Heart right ventricle (tissue), 16 donors: ENCODE measurements at regions of chr6 and their contacts with region 1.

Region 1: DNA sequence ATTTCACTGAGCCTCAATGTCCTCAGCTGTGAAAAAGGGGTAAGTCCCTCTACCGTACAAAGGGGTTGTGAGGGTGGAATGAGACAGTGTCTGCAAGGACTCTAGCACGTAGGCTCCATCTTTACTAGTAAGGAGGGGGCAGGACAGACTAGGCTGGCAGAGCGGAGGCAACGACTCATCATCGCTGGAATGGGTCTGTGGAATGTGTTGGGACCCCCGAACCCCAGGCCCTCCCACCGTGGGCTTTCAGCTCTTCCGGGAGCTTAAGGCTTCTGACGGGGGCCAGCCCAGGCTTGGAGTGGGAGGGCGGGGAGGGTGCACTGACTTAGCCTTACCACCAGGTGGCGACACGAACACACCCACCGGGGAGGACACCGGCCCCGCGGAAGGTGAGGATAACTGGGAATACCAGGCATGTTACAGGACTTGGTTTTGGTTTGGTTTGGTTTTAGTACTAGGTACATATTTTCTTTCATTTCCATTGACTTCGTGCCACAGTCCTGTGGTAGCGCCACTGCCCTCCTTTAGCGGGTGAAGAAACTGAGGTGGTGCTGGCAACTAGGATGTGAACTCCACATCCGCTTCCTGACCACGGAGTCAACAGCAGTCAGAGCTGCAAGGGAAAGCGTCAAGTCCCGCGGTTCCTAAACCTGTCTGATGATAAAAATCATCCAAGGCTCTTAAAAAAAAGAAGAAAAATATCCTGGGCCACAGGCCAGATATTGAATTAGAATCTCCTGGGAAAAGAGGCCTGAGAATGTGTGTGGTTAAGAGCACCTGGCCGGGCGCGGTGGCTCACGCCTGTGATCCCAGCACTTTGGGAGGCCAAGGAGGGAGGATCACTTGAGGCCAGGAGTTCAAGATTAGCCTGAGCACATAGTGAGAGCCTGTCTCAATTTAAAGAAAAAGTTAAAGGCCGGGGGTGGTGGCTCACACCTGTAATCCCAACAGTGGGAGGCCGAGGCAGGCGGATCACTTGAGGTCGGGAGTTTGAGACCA is 10.3 kb upstream of the TULP1 start:
- DNase-seq: peak; percentile 65 to 72
- ATAC-seq: peak; percentile 82 to 95 (median 92)
- H3K4me3 ChIP-seq: peak overlapping the region in 6 of 10 donors; percentile 23 to 43 (median 36)
- H3K27ac ChIP-seq: peak overlapping the region in 1 of 10 donors; percentile 3
- H3K4me1 ChIP-seq: peaks cover 0 to 10% (median 0%) of the 10 kb centered on the region in 9 donors
- H3K27me3 ChIP-seq: no peaks in the 10 kb centered on the region
- CTCF ChIP-seq: peak; percentile 87 to 99 (median 98)

Region 2: GRCh38 chr6:35402136-35402855 is 120.7 kb before region 1 on chr6:
- intact Hi-C with region 1: no loop called
- DNase-seq: no peak
- ATAC-seq: peak in 1 of 8 donors; percentile 26
- H3K4me3 ChIP-seq: no peak overlapping the region
- H3K27ac ChIP-seq: no peak overlapping the region
- H3K4me1 ChIP-seq: peaks cover 0 to 21% (median 0%) of the 10 kb centered on the region in 9 donors
- H3K27me3 ChIP-seq: no peaks in the 10 kb centered on the region
- CTCF ChIP-seq: no peak

Region 3: DNA sequence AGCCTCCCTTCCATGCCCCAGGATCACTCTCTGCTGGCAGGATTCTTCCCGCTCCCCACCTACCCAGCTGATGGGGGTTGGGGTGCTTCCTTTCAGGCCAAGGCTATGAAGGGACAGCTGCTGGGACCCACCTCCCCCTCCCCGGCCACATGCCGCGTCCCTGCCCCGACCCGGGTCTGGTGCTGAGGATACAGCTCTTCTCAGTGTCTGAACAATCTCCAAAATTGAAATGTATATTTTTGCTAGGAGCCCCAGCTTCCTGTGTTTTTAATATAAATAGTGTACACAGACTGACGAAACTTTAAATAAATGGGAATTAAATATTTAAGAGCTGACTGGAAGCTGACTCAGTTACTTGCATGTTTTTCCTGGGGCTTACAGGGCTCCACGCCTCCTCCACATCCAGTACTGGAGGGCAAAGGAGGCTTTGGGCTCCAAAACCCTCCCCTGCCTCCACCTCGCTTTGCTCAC is 95.1 kb before region 1 on chr6:
- intact Hi-C with region 1: no loop called
- DNase-seq: no peak
- ATAC-seq: no peak
- H3K4me3 ChIP-seq: no peak overlapping the region
- H3K27ac ChIP-seq: no peak overlapping the region
- H3K4me1 ChIP-seq: peaks cover 0 to 16% (median 0%) of the 10 kb centered on the region in 9 donors
- H3K27me3 ChIP-seq: no peaks in the 10 kb centered on the region
- CTCF ChIP-seq: no peak

Region 4: GRCh38 chr6:35573495-35574110 is 50.6 kb after region 1 on chr6:
- intact Hi-C with region 1: loop called in 1 of 10 experiments (anchors 10 kb)
- DNase-seq: no peak
- ATAC-seq: no peak
- H3K4me3 ChIP-seq: no peak overlapping the region
- H3K27ac ChIP-seq: no peak overlapping the region
- H3K4me1 ChIP-seq: no peaks in the 10 kb centered on the region
- H3K27me3 ChIP-seq: no peaks in the 10 kb centered on the region
- CTCF ChIP-seq: no peak

Region 5: GRCh38 chr6:35624341-35625070 is 101.5 kb after region 1 on chr6:
- intact Hi-C with region 1: loop called in 1 of 10 experiments (anchors 5 kb)
- DNase-seq: no peak
- ATAC-seq: peak in 1 of 8 donors; percentile 23
- H3K4me3 ChIP-seq: no peak overlapping the region
- H3K27ac ChIP-seq: peak overlapping the region in 2 of 10 donors; percentile 62 to 69
- H3K4me1 ChIP-seq: peaks cover 0 to 63% (median 0%) of the 10 kb centered on the region in 9 donors
- H3K27me3 ChIP-seq: no peaks in the 10 kb centered on the region
- CTCF ChIP-seq: peak in 8 of 9 donors; percentile 10 to 51 (median 31)

Region 6: DNA sequence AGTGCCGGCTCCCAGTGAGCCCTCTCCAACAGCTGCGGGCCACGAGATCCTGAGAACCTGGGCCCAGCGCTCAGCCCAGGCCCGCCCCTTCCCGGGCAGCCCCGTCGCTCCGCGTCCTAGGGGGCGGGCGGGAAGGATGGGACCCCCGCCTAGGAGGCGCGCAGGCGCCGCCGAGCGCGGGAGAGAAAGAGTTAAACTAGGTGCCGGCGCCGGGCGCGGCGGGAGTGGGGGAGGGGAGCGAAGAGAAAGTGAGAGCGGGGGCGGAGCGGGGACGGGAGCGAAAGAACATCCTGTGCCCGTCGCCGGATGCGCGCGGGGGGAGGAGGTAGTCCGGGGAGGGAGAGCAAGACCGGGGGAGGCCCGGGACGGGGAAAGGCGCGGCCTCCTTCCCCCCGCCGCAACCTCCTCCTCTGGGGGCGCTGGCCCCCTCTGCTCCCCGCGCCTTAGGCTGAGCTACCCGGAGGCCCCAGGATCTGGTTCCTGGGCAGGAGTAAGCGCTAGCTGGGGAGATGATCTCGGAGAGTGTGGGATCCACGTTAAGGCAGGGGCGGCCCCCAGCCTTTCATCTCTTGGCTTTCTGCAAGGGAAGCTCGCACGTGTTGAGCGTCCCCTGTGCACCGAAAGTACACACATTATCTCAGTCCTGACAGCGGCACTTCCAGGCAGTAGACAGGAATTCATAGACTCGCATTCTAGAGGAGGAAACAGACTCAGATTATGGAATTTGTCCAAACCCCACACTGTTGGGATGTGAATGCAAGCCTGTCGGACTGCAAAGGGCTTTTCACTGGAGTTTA is 209.0 kb after region 1 on chr6:
- intact Hi-C with region 1: loop called (anchors 1 to 5 kb)
- DNase-seq: peak; percentile 95 to 98
- ATAC-seq: peak; percentile 60 to 86 (median 77)
- H3K4me3 ChIP-seq: peak overlapping the region; percentile 42 to 96 (median 84)
- H3K27ac ChIP-seq: peak overlapping the region; percentile 98 to 100 (median 100)
- H3K4me1 ChIP-seq: peaks cover 21 to 80% (median 56%) of the 10 kb centered on the region in 9 donors
- H3K27me3 ChIP-seq: no peaks in the 10 kb centered on the region
- CTCF ChIP-seq: peak in 5 of 9 donors; percentile 9 to 47 (median 21)

Region 7: DNA sequence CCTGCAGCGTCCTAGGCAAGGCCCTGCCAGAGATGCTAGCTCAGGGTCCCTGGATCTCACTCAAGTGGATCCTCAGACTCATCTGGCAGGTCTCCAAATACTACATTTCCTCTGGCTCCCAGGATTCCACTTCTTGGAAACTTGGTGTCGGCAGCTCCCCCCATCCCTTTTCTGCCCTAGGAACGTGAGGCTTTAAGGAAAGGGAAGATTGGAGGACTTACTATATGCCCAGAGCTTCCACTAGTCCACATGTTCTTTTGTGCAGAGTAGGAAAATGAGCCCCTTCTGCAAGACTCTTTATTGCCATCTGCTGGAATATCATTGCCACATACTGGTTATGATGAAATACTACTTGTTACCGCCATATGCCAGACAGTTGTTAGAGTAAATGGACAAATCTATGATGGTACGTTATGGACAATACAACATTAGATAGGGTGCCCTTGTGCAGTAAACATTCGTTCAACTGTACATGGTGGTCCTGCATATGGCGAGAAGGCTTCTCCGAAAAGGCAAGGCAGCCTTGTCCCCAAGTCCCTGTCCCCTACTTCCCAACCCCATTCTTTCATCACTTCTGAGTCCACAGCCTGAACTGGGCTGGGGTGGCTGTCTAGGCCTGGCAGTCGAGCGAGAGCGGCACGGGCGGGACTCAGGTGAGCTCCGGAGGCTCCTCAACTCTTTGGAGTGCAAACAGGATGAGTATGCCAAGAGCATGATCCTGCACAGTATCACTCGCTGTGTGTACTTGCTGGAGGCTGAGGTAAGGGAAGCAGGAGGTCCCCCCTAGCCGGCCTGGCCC is 214.7 kb after region 1 on chr6:
- intact Hi-C with region 1: loop called (anchors 1 to 5 kb)
- DNase-seq: no peak
- ATAC-seq: peak; percentile 70 to 91 (median 80)
- H3K4me3 ChIP-seq: no peak overlapping the region
- H3K27ac ChIP-seq: no peak overlapping the region
- H3K4me1 ChIP-seq: peaks cover 5 to 43% (median 20%) of the 10 kb centered on the region in 9 donors
- H3K27me3 ChIP-seq: no peaks in the 10 kb centered on the region
- CTCF ChIP-seq: peak; percentile 83 to 92 (median 87)

Region 8: GRCh38 chr6:35757456-35758123 is 234.6 kb after region 1 on chr6:
- intact Hi-C with region 1: loop called in 1 of 10 experiments (anchors 5 kb)
- DNase-seq: no peak
- ATAC-seq: no peak
- H3K4me3 ChIP-seq: no peak overlapping the region
- H3K27ac ChIP-seq: no peak overlapping the region
- H3K4me1 ChIP-seq: no peaks in the 10 kb centered on the region
- H3K27me3 ChIP-seq: peaks cover 0 to 43% (median 28%) of the 10 kb centered on the region in 7 donors
- CTCF ChIP-seq: peak in 6 of 9 donors; percentile 23 to 41 (median 32)

Region 9: DNA sequence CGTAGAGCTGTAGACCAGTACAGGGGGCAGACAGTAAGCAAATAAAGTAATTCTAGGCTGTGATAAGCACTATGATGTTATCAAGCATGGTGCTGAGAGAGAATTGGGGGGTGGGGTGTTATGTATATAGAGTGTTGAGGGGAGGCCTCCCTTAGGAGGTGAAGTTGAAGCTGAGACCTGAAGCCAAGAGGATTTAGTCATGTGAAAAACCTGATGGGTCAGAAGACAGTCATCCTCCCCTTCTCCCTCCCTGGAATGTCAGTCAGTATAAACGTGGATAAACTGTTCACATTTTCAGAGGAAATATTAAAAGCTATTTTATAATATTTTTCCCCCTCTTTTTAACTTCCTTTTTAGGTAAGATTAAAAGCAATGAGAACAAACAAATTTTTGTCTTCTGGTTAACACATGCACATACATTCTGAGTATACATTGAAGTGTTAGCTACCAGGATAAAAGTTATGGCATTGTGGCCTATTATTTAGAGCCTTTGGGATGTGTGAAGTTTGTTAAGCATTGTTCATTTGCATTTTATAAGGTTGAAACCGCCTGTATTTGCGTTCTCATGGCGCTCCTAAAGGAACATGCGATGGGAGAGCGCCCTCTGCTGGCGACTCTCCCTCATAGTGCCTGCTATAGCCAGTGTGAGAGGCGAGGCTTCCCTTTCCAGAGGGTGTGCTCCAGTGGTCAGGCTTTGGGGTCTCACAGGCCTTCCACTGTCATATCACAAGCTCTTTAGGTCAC is 572.0 kb after region 1 on chr6:
- intact Hi-C with region 1: loop called in 1 of 10 experiments (anchors 10 kb)
- DNase-seq: peak; percentile 78 to 81
- ATAC-seq: peak; percentile 89 to 96 (median 95)
- H3K4me3 ChIP-seq: peak overlapping the region in 1 of 10 donors; percentile 8
- H3K27ac ChIP-seq: peak overlapping the region in 3 of 10 donors; percentile 9 to 50 (median 39)
- H3K4me1 ChIP-seq: peaks cover 0 to 33% (median 16%) of the 10 kb centered on the region in 9 donors
- H3K27me3 ChIP-seq: no peaks in the 10 kb centered on the region
- CTCF ChIP-seq: peak; percentile 80 to 99 (median 96)